Activated naive CD4-positive, alpha-beta T cell treated with anti-CD3 and anti-CD28 coated beads for 36 hours (primary cell): ENCODE measurements at regions of chr4 and their contacts with region 1.

Region 1: DNA sequence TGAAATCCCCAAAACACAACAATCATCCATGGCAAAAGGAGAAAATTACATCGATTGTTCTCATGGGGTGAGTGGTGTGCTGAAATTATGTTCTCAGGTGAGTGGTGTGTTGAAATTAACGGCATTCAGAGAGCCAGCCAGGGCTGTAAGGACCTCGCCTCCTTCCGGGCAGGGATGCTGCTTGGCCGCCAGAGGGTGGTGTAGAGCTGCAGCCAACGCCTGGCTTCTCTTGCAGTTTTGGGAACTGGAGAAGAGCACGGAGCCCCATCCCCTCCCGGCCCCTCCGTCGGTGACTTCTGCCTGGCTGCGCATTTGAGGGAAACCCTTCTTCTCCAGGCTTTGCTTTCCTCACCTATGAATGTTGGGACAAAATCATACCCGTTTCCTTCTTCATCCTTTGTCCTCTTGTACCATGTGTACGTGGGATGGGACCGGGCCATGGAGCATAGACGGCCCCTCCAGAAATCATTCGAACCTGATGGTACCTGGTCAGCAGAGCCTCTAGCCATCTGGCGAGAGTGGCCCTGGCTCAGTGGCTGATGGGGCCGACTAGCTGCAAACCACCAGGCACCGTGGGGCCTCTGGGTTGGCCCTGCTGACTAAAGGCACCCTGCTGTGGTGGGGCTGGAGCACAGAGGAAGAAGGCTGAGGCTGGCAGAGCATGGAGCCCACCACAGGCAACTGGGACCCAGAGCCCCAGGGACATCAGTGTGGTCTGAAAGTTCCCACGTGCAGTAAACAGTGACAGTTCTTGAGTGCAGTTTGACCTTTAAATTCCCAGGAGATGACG is 28.4 kb downstream of the TRMT44 start:
- DNase-seq: peak; percentile 72
- H3K4me3 Mint-ChIP-seq: no peak overlapping the region
- H3K27ac Mint-ChIP-seq: peak overlapping the region; percentile 8
- H3K4me1 Mint-ChIP-seq: no peaks in the 10 kb centered on the region
- H3K27me3 Mint-ChIP-seq: no peaks in the 10 kb centered on the region

Region 2: GRCh38 chr4:8547108-8547970 is 78.4 kb after region 1 on chr4:
- CTCF ChIA-PET with region 1: no interaction called
- intact Hi-C with region 1: loop called (anchors 2 kb)
- DNase-seq: no peak
- H3K4me3 Mint-ChIP-seq: no peak overlapping the region
- H3K27ac Mint-ChIP-seq: no peak overlapping the region
- H3K4me1 Mint-ChIP-seq: no peaks in the 10 kb centered on the region
- H3K27me3 Mint-ChIP-seq: no peaks in the 10 kb centered on the region

Region 3: DNA sequence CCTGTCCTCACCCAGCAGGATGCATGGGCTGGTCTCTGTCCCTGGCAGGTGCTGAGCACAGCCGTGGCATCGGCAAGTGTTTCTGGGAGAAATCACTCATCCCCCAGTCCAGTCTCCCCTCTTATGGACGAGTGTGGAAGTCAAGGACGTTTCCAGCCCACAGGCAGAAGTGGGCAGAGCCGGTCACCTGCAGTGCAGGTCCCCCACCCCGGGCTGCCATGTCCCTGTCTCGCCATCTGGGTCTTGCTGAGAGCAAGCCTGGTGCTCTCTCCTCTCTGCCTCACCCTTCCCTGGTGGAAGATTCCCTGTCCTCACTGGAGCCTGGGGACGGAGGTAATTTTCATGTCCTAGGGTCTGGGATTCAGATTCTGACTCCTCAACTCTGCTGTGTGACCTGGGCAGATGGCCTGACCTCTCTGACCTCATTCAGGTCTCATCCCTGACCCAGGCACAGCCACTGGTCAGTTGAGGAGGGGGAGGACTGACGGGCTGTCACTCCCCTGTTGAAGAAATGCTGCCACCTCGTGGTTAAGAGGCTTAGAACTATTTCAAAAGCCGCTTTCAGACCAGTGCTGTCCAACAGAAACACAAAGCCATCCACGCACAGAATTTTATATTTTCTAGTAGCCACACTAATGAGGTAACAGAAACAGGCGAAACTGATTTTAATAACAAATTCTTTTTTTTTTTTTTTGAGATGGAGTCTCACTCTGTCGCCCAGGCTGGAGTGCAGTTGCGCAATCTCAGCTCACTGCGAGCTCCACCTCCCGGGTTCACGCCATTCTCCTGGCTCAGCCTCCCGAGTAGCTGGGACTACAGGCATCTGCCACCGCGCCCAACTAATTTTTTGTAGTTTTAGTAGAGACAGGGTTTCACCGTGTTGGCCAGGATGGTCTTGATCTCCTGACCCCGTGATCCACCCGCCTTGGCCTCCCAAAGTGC is 125.4 kb after region 1 on chr4:
- CTCF ChIA-PET with region 1: interaction called, 4 read pairs
- intact Hi-C with region 1: loop called (anchors 1 kb)
- DNase-seq: peak; percentile 45
- H3K4me3 Mint-ChIP-seq: no peak overlapping the region
- H3K27ac Mint-ChIP-seq: no peak overlapping the region
- H3K4me1 Mint-ChIP-seq: no peaks in the 10 kb centered on the region
- H3K27me3 Mint-ChIP-seq: peaks cover 12% of the 10 kb centered on the region

Region 4: DNA sequence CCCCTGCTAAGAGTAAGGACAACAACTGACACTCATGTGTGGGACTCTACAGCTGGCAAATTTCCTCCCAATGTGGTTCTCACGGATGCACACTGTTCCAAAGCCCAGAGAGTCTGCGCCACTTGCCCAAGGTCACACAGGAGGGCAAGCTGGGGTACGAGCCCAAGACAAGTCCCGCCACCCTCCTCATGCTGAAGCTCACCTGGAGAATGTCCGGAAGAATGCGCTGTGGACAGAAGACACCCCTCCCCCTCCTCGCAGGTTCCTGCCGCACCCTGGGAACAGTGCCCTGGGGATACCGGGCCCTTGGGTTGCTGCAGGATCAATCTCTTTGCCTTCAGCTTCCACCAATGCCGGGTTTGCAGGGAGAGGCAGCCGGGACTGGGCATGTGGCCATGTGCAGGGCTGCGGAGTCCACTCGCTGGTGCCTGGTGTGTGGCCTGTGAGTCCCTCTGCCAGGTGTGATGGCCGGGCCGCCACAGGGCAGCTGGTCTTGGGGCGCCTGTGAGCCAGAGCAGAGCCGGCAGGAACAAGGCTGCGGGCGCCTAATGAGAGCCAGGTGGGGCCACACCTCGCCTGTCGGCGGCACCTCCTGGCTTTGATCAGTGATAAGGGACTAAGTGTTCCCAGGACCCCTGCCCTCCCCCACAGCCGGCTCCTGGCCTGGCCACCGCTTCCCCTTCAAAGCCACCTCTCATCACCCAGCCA is 256.0 kb after region 1 on chr4:
- CTCF ChIA-PET with region 1: no interaction called
- intact Hi-C with region 1: no loop called
- DNase-seq: no peak
- H3K4me3 Mint-ChIP-seq: no peak overlapping the region
- H3K27ac Mint-ChIP-seq: no peak overlapping the region
- H3K4me1 Mint-ChIP-seq: no peaks in the 10 kb centered on the region
- H3K27me3 Mint-ChIP-seq: no peaks in the 10 kb centered on the region